HCT116 (cell line): ENCODE measurements at regions of chr4 and their contacts with region 1.

Region 1: DNA sequence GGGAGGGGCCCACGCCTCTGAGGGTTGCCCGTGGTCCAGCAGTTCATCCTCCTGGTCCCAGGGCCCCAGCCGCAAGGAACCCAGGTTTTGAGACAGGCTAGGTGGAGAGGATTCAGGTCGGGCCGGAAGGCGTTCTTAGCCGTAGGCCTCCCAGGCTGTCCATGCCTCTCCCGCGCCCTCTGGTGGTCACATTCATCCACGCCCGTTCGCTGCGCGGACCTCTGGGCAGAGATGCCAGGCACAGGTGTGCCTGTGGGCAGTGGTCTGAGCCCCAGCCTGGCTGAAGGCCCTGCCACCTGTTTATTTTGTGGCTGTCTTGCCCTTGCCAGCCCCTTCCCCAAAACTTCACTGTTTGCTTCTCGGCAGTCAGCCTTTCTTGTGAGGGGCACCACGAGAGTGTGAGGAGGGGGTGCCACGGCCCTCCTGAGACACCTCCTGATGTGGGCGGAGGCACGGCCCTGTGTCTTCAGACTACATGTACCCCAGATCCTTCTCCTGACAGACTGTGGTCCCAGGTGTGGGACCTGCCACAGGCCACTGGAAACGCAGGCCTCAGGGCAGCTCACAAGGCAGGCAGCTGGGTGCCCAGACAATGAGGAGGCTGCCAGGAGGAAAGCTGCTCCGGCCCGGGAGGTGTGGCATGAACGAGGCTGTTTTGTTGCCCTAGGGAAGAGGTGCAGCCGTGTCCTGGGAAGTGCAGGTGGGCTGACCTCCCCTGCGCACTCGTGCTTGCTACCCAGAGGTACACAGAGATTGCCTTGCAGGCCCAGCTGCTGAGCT is 5.0 kb downstream of the UVSSA start:
- DNase-seq: peak; percentile 50
- ATAC-seq: peak; percentile 56
- H3K4me3 ChIP-seq: no peak overlapping the region
- H3K27ac ChIP-seq: peak overlapping the region; percentile 41
- H3K4me1 ChIP-seq: peaks cover 8 to 16% of the 10 kb centered on the region in 2 experiments
- H3K27me3 ChIP-seq: no peaks in the 10 kb centered on the region
- CTCF ChIP-seq: peak in 2 of 3 experiments; percentile 94; a peak in 4 of 6 replicates
- POLR2A ChIP-seq: no peak
- RAD21 ChIP-seq: no peak

Region 2: GRCh38 chr4:1130316-1131186 is 221.5 kb before region 1 on chr4:
- CTCF ChIA-PET with region 1: interaction called, 6 read pairs
- POLR2A ChIA-PET with region 1: no interaction called
- RAD21 ChIA-PET with region 1: no interaction called
- intact Hi-C with region 1: loop called (anchors 1 kb)
- DNase-seq: peak; percentile 57
- ATAC-seq: peak; percentile 99
- H3K4me3 ChIP-seq: no peak overlapping the region
- H3K27ac ChIP-seq: no peak overlapping the region
- H3K4me1 ChIP-seq: peaks cover 0 to 6% of the 10 kb centered on the region in 2 experiments; a peak in 2 of 4 replicates
- H3K27me3 ChIP-seq: peaks cover 5% of the 10 kb centered on the region; the same call in 1 of the 2 replicates
- CTCF ChIP-seq: peak; percentile 94 to 99 (median 99)
- POLR2A ChIP-seq: no peak
- RAD21 ChIP-seq: peak; percentile 96

Region 3: DNA sequence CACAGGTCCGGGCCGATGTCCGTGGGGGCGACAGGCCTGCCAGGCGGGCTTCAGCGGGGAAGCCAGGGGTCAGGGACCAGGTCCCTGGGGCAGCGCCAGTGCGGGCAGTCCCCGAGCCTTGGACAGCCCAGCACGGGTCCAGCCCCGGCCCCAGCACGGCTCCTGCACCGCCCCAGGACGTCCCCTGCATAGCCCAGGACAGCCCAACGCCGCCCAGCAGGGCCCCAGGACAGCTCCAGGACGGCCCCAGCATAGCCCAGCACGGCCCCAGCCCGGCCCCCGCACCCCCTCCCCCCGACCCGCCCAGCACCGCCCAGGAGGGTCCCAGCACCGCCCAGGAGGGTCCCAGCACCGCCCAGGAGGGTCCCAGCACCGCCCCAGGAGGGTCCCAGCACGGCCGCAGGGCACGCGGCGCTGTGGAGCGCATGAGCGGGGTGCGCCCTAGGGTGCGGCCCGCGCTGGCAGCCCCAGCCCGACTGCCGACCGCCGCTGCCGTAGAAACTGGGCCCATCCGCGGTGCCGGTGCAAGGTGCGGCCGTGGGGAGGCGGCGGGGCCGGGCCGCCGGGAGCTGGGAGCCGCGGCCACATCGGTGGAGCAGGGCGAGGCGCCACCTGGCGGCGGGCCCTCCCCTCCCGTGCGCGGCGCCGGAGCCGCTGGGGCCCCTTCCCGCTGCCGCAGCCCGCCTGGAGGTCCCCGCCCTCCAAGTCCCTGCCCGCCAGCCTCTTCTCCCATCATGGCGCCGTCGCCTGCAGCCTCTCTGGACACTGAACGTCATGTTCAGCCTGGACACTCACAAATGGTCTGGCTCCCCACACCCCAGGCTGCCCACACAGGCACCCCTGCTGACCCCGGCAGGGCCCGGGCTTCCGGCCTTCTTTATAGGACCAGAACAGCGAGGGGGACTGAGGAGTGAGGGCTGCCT is 161.0 kb after region 1 on chr4:
- CTCF ChIA-PET with region 1: interaction called, 5 read pairs
- POLR2A ChIA-PET with region 1: no interaction called
- RAD21 ChIA-PET with region 1: interaction called in 1 of 2 experiments, 6 read pairs
- intact Hi-C with region 1: loop called (anchors 10 kb)
- DNase-seq: peak; percentile 15
- ATAC-seq: peak; percentile 87
- H3K4me3 ChIP-seq: peak overlapping the region; percentile 30 to 45
- H3K27ac ChIP-seq: peak overlapping the region; percentile 19; the same call in 1 of the 2 replicates
- H3K4me1 ChIP-seq: peaks cover 0 to 13% of the 10 kb centered on the region in 2 experiments; a peak in 2 of 4 replicates
- H3K27me3 ChIP-seq: no peaks in the 10 kb centered on the region
- CTCF ChIP-seq: peak; percentile 18 to 57 (median 53); a peak in 4 of 6 replicates
- POLR2A ChIP-seq: no peak
- RAD21 ChIP-seq: no peak; the same call in 1 of the 2 replicates

Region 4: DNA sequence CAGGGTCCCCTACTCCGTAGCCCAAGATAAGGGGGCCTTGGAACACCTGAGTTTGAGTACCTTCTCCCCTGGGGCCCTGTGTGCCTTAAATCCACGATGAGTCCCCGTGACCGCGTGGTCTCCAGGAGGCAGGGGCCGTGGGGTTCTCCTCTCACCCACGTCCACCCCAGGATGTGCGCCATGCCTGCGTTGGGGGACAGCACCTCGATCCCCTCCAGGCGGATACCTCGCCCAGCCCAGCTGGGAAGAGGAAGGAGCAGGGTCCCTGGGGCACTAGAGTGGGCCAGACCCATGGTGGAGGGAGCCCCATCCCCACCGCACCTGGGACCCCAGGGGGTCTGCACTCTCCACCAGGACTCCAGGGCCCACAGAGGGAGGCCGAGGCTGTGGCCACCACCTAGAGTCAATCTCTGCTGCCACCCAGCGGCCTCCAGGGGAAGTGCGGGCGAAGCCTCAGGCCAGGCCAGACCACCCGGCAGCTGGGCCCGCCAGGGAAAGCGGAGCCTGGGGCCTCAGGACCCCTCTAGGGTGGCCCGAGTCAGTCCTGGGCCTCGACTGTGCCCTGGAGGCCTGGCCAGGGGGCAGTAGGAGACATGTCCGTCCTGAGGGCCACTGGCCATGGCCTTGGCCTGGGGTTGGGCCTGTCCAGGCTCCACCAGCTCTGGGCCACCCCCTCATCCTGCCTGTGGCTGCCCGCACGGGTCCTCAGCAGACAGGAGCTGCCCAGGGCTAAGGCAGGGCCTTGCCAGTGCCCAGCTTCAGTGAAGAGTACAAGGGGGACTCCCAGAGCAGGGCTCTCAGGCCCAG is 277.1 kb after region 1 on chr4:
- CTCF ChIA-PET with region 1: interaction called, 10 read pairs
- POLR2A ChIA-PET with region 1: no interaction called
- RAD21 ChIA-PET with region 1: no interaction called
- intact Hi-C with region 1: loop called (anchors 2 kb)
- DNase-seq: peak; percentile 4
- ATAC-seq: peak; percentile 97
- H3K4me3 ChIP-seq: no peak overlapping the region
- H3K27ac ChIP-seq: no peak overlapping the region
- H3K4me1 ChIP-seq: no peaks in the 10 kb centered on the region
- H3K27me3 ChIP-seq: no peaks in the 10 kb centered on the region
- CTCF ChIP-seq: peak; percentile 71 to 95 (median 88)
- POLR2A ChIP-seq: no peak
- RAD21 ChIP-seq: peak; percentile 92